ENCODE measurements at regions of chr11 and their contacts with region 1.

Region 1: DNA sequence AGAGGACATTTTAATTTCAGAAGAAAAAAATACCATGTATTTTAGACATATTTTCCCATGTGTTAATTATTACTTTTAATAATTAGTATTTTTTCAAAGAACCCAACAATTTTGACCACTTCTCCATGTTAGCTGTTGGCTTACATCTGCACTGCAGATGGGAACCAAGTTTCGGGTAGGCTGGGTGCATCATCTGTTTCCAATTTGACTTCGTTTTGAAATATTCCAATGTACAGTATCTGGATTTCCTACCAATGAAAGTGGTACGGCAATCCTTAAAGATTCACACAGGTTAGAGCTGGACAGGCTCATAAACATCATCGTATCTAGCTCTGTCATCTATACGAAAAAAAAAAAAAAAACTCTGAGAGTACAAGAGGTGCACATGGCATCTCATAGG is 670.2 kb downstream of the OPCML start:
- DNase-seq: no peak
- H3K4me3 ChIP-seq: no peak overlapping the region
- H3K27me3 ChIP-seq: no peaks in the 10 kb centered on the region; the same call in 1 of the 2 replicates
- CTCF ChIP-seq: no peak

Region 2: DNA sequence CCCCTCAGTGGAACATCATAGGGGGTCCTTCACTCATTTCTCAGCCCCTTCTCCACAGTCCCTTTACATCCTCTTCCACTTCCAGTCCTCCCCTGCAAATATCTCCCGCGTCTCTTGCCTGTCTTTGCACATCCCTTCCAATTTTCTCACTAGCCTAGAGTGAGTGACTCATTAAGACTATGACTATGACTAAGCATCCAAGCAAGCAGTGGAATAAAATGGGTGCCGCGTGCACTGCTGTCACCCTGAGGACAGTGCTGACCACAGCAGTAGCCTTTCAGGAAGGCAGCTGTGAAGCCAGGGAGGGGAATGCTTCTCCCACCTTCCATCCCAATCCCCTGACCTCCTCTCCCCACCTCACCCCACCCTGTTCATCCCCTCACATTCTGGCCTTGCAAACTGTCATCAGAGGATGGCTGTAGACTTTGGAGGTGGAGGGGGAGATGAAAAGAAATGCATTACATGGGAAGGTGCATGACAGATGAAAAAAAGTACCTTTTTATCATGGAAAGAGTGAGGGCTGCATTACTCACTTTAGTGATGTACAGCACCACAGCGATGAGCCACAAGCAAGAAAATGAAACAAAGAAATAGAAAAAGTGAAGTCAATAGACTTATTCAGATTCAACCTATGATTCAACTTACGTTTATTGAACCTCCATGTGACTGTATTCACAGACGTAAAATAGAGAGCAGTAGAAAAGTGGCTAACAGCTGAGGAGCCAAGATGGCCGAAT is 543.5 kb before region 1 on chr11:
- CTCF ChIA-PET with region 1: no interaction called
- POLR2A ChIA-PET with region 1: interaction called, 13 read pairs
- DNase-seq: no peak
- H3K4me3 ChIP-seq: no peak overlapping the region
- H3K27me3 ChIP-seq: no peaks in the 10 kb centered on the region
- CTCF ChIP-seq: no peak